Activated CD4-positive, alpha-beta T cell treated with anti-CD3 and anti-CD28 coated beads for 36 hours (primary cell): ENCODE measurements at regions of chr11 and their contacts with region 1.

Region 1: DNA sequence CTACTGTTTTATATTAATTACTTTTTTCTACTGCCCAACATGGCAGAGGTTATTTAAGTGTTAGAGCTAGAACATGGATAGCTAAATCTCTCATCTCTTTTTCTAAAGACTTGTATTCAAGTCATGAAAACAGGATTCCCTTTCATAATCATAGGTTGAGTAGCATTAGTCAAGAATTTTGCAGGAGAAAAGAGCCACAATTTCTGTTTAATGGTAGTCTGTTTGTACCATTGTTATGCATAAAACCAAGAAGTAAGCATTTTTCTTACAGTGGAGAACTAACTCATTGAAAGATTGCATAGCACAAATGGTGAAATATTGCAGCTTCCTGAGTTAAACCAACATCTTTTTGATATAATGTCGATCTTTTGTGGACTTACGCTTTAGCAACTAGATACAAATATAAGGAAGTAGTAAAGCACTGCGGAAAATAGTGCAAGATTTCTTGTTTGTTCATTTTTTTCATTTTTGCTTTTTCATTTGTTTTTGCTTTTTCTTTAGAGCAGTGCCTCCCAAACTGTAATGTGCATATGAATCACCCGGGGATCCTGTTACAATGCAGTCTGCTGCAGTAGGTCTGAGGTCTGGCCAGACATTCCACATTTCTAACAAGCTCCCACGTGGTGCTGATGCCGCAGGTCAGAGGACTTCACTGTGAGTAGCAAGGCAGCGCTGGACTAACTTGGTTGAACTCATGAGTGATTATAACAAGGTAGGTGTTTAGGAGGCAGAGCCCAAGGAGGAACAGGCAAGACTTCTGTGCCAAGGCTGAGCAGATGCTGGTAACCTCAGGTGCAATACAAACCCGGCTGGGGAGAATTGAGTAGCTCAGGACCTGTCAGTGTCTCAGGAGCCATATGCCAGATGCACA is 4.6 kb downstream of the ETS1 start:
- DNase-seq: peak; percentile 37
- ATAC-seq: no peak
- H3K4me3 Mint-ChIP-seq: peak overlapping the region; percentile 48
- H3K27ac Mint-ChIP-seq: peak overlapping the region; percentile 75
- H3K4me1 Mint-ChIP-seq: peaks cover 61% of the 10 kb centered on the region
- H3K27me3 Mint-ChIP-seq: peaks cover 2% of the 10 kb centered on the region

Region 2: DNA sequence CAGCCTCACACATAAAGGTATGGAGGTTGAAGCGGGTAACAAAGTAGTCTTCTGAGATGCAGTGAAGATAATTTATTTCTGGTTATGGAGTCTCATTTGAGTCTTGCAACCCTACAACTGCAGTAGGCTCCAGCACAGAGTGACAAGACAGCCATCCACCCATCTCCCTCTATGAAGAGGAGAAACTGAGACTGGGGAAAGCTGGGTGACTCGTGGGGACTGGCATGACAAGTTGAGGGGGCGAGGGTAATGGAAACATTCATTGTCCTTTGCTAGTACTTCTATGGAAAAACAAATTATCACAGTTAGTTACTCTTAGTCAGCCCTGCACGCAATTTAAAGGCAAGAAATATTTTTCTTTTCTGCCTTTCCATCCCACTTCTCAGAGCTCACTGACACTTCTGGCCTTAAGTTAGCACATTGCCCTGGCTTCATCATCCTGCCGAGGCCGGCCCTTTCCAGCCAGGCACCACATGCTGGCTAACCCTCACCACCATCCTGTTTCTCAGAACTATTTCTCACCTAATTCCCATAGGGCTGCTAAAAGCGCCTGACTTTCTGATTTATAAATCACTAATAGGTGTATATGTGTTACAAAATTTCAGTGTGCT is 356.5 kb before region 1 on chr11:
- CTCF ChIA-PET with region 1: no interaction called
- POLR2A ChIA-PET with region 1: no interaction called
- intact Hi-C with region 1: loop called in 1 of 2 experiments (anchors 1 kb)
- DNase-seq: peak; percentile 62
- ATAC-seq: peak; percentile 54
- H3K4me3 Mint-ChIP-seq: no peak overlapping the region
- H3K27ac Mint-ChIP-seq: peak overlapping the region; percentile 55
- H3K4me1 Mint-ChIP-seq: peaks cover 52% of the 10 kb centered on the region
- H3K27me3 Mint-ChIP-seq: no peaks in the 10 kb centered on the region

Region 3: DNA sequence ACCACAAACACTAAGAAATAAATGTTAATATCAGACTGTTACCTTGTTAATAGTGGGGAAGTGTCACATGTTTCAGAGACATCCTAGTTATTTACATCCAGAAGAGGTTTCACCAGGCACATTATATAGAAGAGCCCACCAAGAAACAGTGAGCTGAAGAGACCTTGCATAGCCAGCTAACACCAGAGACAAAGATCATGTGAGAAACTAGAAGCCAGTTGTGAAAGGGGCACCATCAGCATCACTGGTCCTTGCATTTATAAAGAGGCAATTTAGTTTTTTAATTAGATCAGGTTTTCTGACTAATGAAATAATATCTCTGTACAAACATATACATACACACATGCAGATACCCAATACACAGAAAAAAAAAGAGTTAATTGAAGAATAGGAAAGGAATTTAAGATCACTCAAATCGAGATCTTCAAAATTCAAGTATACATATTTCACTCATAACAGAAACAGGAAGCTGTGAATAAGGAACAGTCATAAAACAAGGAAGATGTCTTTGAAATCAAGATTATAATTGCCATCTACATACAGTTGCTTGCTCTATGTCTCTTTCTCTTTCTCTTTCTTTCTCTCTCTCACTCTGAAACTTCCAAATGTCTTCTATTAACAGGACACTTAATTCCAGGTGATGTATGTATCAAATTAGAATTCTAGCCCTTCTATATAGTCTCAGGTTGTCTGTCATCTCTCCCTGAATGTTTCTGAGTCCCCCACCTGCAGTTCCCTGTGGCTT is 344.0 kb before region 1 on chr11:
- CTCF ChIA-PET with region 1: no interaction called
- POLR2A ChIA-PET with region 1: no interaction called
- intact Hi-C with region 1: loop called in 1 of 2 experiments (anchors 2 kb)
- DNase-seq: no peak
- ATAC-seq: peak; percentile 94
- H3K4me3 Mint-ChIP-seq: peak overlapping the region; percentile 39
- H3K27ac Mint-ChIP-seq: peak overlapping the region; percentile 84
- H3K4me1 Mint-ChIP-seq: peaks cover 34% of the 10 kb centered on the region
- H3K27me3 Mint-ChIP-seq: no peaks in the 10 kb centered on the region

Region 4: GRCh38 chr11:128553662-128554362 is 28.9 kb before region 1 on chr11:
- CTCF ChIA-PET with region 1: interaction called, 9 read pairs
- POLR2A ChIA-PET with region 1: interaction called, 7 read pairs
- intact Hi-C with region 1: loop called (anchors 1 kb)
- DNase-seq: no peak
- ATAC-seq: no peak
- H3K4me3 Mint-ChIP-seq: no peak overlapping the region
- H3K27ac Mint-ChIP-seq: peak overlapping the region; percentile 94
- H3K4me1 Mint-ChIP-seq: peaks cover 56% of the 10 kb centered on the region
- H3K27me3 Mint-ChIP-seq: no peaks in the 10 kb centered on the region

Region 5: GRCh38 chr11:128624269-128625175 is 41.8 kb after region 1 on chr11:
- CTCF ChIA-PET with region 1: interaction called, 7 read pairs
- POLR2A ChIA-PET with region 1: interaction called, 8 read pairs
- intact Hi-C with region 1: loop called (anchors 1 to 2 kb)
- DNase-seq: peak; percentile 70
- ATAC-seq: peak; percentile 35
- H3K4me3 Mint-ChIP-seq: peak overlapping the region; percentile 58
- H3K27ac Mint-ChIP-seq: peak overlapping the region; percentile 90
- H3K4me1 Mint-ChIP-seq: peaks cover 95% of the 10 kb centered on the region
- H3K27me3 Mint-ChIP-seq: no peaks in the 10 kb centered on the region

Region 6: DNA sequence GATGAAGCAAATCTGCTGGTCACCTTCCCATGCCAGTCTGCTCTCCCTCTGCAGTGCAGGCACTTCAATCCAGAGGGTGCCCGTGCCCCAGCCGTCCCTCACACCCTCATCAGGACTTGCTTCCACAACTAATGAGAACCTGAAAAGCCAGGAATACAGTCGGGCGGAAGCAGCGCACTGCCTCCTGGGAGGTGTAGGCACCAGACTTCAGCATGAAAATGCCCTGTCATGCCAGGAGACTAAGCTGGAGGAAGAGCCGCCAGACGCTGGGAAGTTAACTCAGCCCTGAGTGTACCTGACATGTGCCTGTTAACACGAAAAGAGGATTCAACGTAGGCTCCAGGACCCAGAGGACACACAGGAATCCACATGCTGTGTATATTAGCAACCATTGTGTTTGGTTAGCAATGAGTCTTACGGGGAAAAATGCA is 71.1 kb after region 1 on chr11:
- CTCF ChIA-PET with region 1: no interaction called
- POLR2A ChIA-PET with region 1: no interaction called
- intact Hi-C with region 1: no loop called
- DNase-seq: peak; percentile 14
- ATAC-seq: no peak
- H3K4me3 Mint-ChIP-seq: no peak overlapping the region
- H3K27ac Mint-ChIP-seq: no peak overlapping the region
- H3K4me1 Mint-ChIP-seq: peaks cover 16% of the 10 kb centered on the region
- H3K27me3 Mint-ChIP-seq: peaks cover 10% of the 10 kb centered on the region

Region 7: DNA sequence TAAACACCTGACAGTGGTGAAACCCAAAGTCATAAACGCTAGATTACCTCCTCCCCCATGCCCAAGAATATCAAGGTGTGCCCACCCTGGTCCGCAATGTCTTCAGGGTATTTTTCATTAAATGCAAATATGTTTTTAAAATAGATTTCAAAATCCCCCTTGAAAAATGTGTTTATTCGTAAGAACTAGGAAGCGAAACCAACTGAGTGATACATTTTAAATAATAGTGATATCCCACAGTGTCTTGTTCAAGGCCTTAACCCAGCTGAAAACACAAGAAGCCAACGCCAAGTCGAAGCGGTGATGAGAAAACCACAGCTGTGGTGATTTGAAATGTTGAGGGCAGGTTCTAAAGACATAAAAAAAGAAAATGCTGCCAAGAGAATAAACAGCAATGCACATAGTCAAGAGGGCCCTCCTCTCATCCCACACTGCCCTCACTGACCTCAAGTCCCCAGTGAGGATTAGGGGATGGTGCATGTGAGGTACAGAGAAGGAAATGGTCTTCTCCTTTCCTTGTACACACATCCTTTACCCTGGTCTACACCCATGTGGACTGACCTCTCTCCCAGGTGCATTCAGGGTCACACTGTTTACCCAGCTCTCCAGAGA is 258.8 kb after region 1 on chr11:
- CTCF ChIA-PET with region 1: no interaction called
- POLR2A ChIA-PET with region 1: no interaction called
- intact Hi-C with region 1: no loop called
- DNase-seq: no peak
- ATAC-seq: no peak
- H3K4me3 Mint-ChIP-seq: no peak overlapping the region
- H3K27ac Mint-ChIP-seq: no peak overlapping the region
- H3K4me1 Mint-ChIP-seq: peaks cover 77% of the 10 kb centered on the region
- H3K27me3 Mint-ChIP-seq: no peaks in the 10 kb centered on the region